ENCODE measurements at regions of chr11 and their contacts with region 1.

Region 1: GRCh38 chr11:104609311-104610085 is 288.8 kb downstream of the CASP12 start:
- DNase-seq: peak in 7 of 9 donors; percentile 17 to 63 (median 51)
- ATAC-seq: peak; percentile 95
- H3K4me3 ChIP-seq: no peak overlapping the region
- H3K4me3 Mint-ChIP-seq: no peak overlapping the region
- H3K27ac ChIP-seq: no peak overlapping the region
- H3K27ac Mint-ChIP-seq: peak overlapping the region in 3 of 9 donors; percentile 25 to 47 (median 41)
- H3K4me1 ChIP-seq: peaks cover 0 to 5% of the 10 kb centered on the region in 2 donors
- H3K4me1 Mint-ChIP-seq: peaks cover 0 to 20% (median 11%) of the 10 kb centered on the region in 7 donors
- H3K27me3 ChIP-seq: no peaks in the 10 kb centered on the region
- H3K27me3 Mint-ChIP-seq: peaks cover 0 to 6% (median 0%) of the 10 kb centered on the region in 5 donors

Region 2: GRCh38 chr11:104772806-104773241 is 163.3 kb after region 1 on chr11:
- CTCF ChIA-PET with region 1: no interaction called
- POLR2A ChIA-PET with region 1: no interaction called
- intact Hi-C with region 1: loop called in 1 of 2 experiments (anchors 5 kb)
- DNase-seq: peak in 6 of 9 donors; percentile 24 to 49 (median 32)
- ATAC-seq: peak; percentile 69
- H3K4me3 ChIP-seq: no peak overlapping the region
- H3K4me3 Mint-ChIP-seq: peak overlapping the region in 6 of 10 donors; percentile 15 to 59 (median 34)
- H3K27ac ChIP-seq: no peak overlapping the region
- H3K27ac Mint-ChIP-seq: peak overlapping the region in 6 of 9 donors; percentile 9 to 53 (median 16)
- H3K4me1 ChIP-seq: peaks cover 0 to 13% of the 10 kb centered on the region in 2 donors
- H3K4me1 Mint-ChIP-seq: peaks cover 3 to 24% (median 20%) of the 10 kb centered on the region in 7 donors
- H3K27me3 ChIP-seq: no peaks in the 10 kb centered on the region
- H3K27me3 Mint-ChIP-seq: peaks cover 0 to 3% (median 0%) of the 10 kb centered on the region in 5 donors

Region 3: GRCh38 chr11:104841185-104841584 is 231.7 kb after region 1 on chr11:
- CTCF ChIA-PET with region 1: no interaction called
- POLR2A ChIA-PET with region 1: no interaction called
- intact Hi-C with region 1: loop called in 1 of 2 experiments (anchors 1 kb)
- DNase-seq: no peak
- ATAC-seq: no peak
- H3K4me3 ChIP-seq: no peak overlapping the region
- H3K4me3 Mint-ChIP-seq: no peak overlapping the region
- H3K27ac ChIP-seq: no peak overlapping the region
- H3K27ac Mint-ChIP-seq: no peak overlapping the region
- H3K4me1 ChIP-seq: no peaks in the 10 kb centered on the region
- H3K4me1 Mint-ChIP-seq: peaks cover 0 to 6% (median 0%) of the 10 kb centered on the region in 7 donors
- H3K27me3 ChIP-seq: no peaks in the 10 kb centered on the region
- H3K27me3 Mint-ChIP-seq: peaks cover 0 to 3% (median 0%) of the 10 kb centered on the region in 5 donors

Region 4: GRCh38 chr11:104946907-104947306 is 337.4 kb after region 1 on chr11:
- CTCF ChIA-PET with region 1: interaction called, 4 read pairs
- POLR2A ChIA-PET with region 1: no interaction called
- intact Hi-C with region 1: loop called (anchors 1 to 5 kb)
- DNase-seq: peak in 7 of 9 donors; percentile 11 to 59 (median 50)
- ATAC-seq: peak; percentile 86
- H3K4me3 ChIP-seq: no peak overlapping the region
- H3K4me3 Mint-ChIP-seq: no peak overlapping the region
- H3K27ac ChIP-seq: no peak overlapping the region
- H3K27ac Mint-ChIP-seq: peak overlapping the region in 6 of 9 donors; percentile 3 to 55 (median 39)
- H3K4me1 ChIP-seq: no peaks in the 10 kb centered on the region
- H3K4me1 Mint-ChIP-seq: peaks cover 5 to 25% (median 14%) of the 10 kb centered on the region in 7 donors
- H3K27me3 ChIP-seq: no peaks in the 10 kb centered on the region
- H3K27me3 Mint-ChIP-seq: no peaks in the 10 kb centered on the region

Region 5: DNA sequence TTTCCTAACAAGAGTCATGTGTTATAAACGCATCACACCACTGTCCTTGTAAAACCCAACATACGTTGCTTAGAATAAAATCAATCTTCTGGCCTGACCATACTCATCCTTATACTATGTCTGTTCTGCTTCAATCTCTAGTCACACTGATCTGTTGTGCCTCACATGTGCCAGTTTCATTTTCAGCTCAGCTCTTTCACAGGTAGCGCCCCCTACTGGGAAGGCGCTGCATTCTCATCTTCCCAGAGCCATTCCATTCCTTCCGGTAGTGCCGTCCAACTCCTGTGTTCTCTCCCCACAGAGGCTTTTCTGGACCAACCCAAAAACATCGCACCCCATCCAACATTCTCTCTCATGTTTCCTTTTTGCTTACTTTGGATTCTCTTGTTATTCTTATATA is 391.3 kb after region 1 on chr11:
- CTCF ChIA-PET with region 1: interaction called, 4 read pairs
- POLR2A ChIA-PET with region 1: no interaction called
- intact Hi-C with region 1: loop called (anchors 1 kb)
- DNase-seq: peak in 8 of 9 donors; percentile 14 to 56 (median 47)
- ATAC-seq: peak; percentile 85
- H3K4me3 ChIP-seq: no peak overlapping the region
- H3K4me3 Mint-ChIP-seq: no peak overlapping the region
- H3K27ac ChIP-seq: no peak overlapping the region
- H3K27ac Mint-ChIP-seq: peak overlapping the region in 1 of 9 donors; percentile 5
- H3K4me1 ChIP-seq: no peaks in the 10 kb centered on the region
- H3K4me1 Mint-ChIP-seq: peaks cover 4 to 11% (median 7%) of the 10 kb centered on the region in 7 donors
- H3K27me3 ChIP-seq: no peaks in the 10 kb centered on the region
- H3K27me3 Mint-ChIP-seq: no peaks in the 10 kb centered on the region

Region 6: GRCh38 chr11:105862736-105863367 is 1253.4 kb after region 1 on chr11:
- CTCF ChIA-PET with region 1: no interaction called
- POLR2A ChIA-PET with region 1: no interaction called
- intact Hi-C with region 1: loop called in 1 of 2 experiments (anchors 1 kb)
- DNase-seq: peak in 5 of 9 donors; percentile 3 to 25 (median 12)
- ATAC-seq: no peak
- H3K4me3 ChIP-seq: no peak overlapping the region
- H3K4me3 Mint-ChIP-seq: no peak overlapping the region
- H3K27ac ChIP-seq: no peak overlapping the region
- H3K27ac Mint-ChIP-seq: no peak overlapping the region
- H3K4me1 ChIP-seq: no peaks in the 10 kb centered on the region
- H3K4me1 Mint-ChIP-seq: no peaks in the 10 kb centered on the region
- H3K27me3 ChIP-seq: no peaks in the 10 kb centered on the region
- H3K27me3 Mint-ChIP-seq: peaks cover 0 to 16% (median 13%) of the 10 kb centered on the region in 5 donors

Measured in naive thymus-derived CD4-positive, alpha-beta T cell (primary cell).